AG04450 (cell line): ENCODE measurements at regions of chr6 and their contacts with region 1.

Region 1: GRCh38 chr6:26196846-26197648 is 109.8 kb downstream of the HFE start:
- DNase-seq: peak; percentile 86
- H3K4me3 ChIP-seq: peak overlapping the region; percentile 88
- H3K27ac ChIP-seq: peak overlapping the region; percentile 91
- H3K27me3 ChIP-seq: no peaks in the 10 kb centered on the region
- CTCF ChIP-seq: no peak

Region 2: GRCh38 chr6:26054857-26055669 is 142.0 kb before region 1 on chr6:
- CTCF ChIA-PET with region 1: no interaction called
- POLR2A ChIA-PET with region 1: interaction called, 14 read pairs
- DNase-seq: peak; percentile 89
- H3K4me3 ChIP-seq: peak overlapping the region; percentile 77
- H3K27ac ChIP-seq: peak overlapping the region; percentile 90
- H3K27me3 ChIP-seq: no peaks in the 10 kb centered on the region
- CTCF ChIP-seq: no peak

Region 3: GRCh38 chr6:26103770-26104456 is 93.1 kb before region 1 on chr6:
- CTCF ChIA-PET with region 1: no interaction called
- POLR2A ChIA-PET with region 1: interaction called, 15 read pairs
- DNase-seq: peak; percentile 88
- H3K4me3 ChIP-seq: peak overlapping the region; percentile 66
- H3K27ac ChIP-seq: peak overlapping the region; percentile 88
- H3K27me3 ChIP-seq: no peaks in the 10 kb centered on the region
- CTCF ChIP-seq: peak; percentile 62

Region 4: DNA sequence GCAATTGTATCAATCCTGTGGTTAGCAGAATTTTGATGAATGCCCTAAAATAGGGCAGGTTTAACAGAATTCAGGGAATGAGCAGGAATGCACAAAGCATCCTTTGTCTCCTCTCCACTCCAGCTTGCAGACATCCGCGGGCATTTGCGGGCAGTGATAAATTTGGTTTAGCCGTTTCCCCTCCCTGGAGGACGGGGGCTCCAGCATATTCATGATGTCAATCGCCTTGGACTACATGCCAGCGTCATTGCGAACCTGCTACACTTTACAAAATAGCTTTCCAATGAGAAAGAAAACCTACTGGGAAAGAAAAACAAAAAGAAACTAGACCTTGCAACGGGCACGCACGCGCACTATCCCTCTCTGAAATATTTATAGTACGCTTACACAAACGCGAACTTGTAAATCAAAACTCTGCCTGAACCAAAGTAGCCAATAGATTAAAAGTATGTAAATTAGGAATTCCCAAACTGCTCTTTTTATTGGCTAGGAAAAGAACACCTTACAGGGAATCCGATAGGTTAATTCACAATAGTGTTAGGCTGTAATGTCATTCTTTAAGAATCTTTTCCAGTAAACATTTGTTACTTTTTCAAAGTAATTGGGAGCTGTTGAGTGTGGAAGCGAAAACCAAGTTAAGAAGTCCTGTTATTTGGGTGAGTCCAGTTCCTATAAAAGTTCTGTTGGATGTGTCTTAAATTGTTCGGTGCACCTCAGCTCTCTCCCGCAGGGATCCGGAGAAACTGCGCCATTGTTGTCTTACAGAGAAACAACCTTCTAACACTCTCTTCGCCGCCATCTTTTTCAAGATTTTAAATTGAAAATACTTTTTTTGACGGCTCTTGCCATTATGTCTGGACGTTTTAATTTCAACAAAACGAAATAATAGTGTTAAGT is 26.9 kb after region 1 on chr6:
- CTCF ChIA-PET with region 1: interaction called, 3 read pairs
- POLR2A ChIA-PET with region 1: interaction called, 183 read pairs
- DNase-seq: peak; percentile 89
- H3K4me3 ChIP-seq: peak overlapping the region; percentile 73
- H3K27ac ChIP-seq: peak overlapping the region; percentile 89
- H3K27me3 ChIP-seq: no peaks in the 10 kb centered on the region
- CTCF ChIP-seq: no peak

Region 5: GRCh38 chr6:26270903-26271667 is 74.0 kb after region 1 on chr6:
- CTCF ChIA-PET with region 1: no interaction called
- POLR2A ChIA-PET with region 1: interaction called, 29 read pairs
- DNase-seq: no peak
- H3K4me3 ChIP-seq: peak overlapping the region; percentile 65
- H3K27ac ChIP-seq: peak overlapping the region; percentile 68
- H3K27me3 ChIP-seq: no peaks in the 10 kb centered on the region
- CTCF ChIP-seq: no peak